Activated CD4-positive, alpha-beta T cell treated with anti-CD3 and anti-CD28 coated beads for 36 hours (primary cell): ENCODE measurements at regions of chr3 and their contacts with region 1.

Region 1: DNA sequence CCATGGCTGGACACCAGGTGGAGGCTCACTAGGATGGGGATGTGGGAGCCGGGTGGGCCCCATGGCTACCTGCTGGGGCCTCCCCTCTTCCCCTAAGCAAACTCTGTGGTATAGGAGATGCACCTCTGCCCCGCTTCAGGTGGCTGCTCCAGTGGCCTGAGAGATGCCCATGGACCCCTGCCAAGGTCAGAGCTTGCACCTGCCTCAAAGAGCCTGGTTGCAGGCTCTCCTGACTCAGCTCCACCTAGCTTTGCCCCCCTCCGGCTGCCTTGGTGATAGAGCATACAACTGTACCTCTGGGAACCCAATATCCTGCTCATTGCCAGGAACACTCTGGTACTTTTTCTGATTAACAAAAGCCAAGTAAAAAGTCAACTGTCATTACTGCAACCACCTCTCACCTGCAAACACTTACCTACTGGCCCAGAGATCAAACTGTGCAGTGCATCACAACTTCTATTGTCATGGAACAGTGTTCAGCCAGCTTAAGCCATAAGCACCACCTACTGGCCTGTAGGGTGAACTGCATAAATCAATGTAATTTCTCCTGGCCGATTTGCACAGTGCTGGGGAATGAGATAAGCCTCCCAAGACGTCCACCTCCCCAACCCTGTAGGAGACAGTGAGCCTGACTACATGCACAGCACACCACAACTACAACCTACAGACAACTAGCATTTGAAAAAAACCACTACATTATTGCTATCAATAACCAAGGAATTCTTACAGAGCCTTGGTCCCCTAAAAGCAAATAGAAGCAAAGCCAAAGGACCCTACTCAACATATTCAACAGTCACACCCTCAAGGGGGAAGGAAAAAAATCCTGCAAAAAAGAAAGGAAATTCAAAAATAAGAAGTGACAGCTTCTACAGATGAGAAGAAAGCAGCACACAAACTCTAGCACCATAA is 352.4 kb upstream of the ARHGEF26 start:
- DNase-seq: peak; percentile 52
- ATAC-seq: peak; percentile 97
- H3K4me3 Mint-ChIP-seq: no peak overlapping the region
- H3K27ac Mint-ChIP-seq: no peak overlapping the region
- H3K4me1 Mint-ChIP-seq: no peaks in the 10 kb centered on the region
- H3K27me3 Mint-ChIP-seq: peaks cover 3% of the 10 kb centered on the region

Region 2: DNA sequence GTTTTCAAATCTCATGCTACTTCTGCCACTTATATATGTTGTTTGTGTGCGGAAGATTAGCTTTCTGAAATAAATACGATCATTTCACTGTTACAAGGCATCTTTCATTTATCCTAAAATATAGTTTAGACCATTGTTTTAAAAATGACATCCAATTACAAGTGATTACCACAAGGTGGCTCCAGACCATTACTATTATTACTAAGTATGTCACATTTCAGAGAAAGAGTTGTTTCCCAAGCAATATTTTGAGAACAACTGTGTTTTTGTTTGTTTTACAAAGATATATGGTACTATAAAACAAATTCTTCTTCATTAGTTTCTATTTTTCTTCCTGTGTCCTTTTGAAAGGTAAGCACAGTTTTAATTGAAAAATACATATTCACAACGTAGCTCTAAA is 742.8 kb before region 1 on chr3:
- CTCF ChIA-PET with region 1: interaction called, 6 read pairs
- POLR2A ChIA-PET with region 1: no interaction called
- intact Hi-C with region 1: loop called (anchors 1 kb)
- DNase-seq: no peak
- ATAC-seq: no peak
- H3K4me3 Mint-ChIP-seq: no peak overlapping the region
- H3K27ac Mint-ChIP-seq: no peak overlapping the region
- H3K4me1 Mint-ChIP-seq: no peaks in the 10 kb centered on the region
- H3K27me3 Mint-ChIP-seq: peaks cover 1% of the 10 kb centered on the region

Region 3: DNA sequence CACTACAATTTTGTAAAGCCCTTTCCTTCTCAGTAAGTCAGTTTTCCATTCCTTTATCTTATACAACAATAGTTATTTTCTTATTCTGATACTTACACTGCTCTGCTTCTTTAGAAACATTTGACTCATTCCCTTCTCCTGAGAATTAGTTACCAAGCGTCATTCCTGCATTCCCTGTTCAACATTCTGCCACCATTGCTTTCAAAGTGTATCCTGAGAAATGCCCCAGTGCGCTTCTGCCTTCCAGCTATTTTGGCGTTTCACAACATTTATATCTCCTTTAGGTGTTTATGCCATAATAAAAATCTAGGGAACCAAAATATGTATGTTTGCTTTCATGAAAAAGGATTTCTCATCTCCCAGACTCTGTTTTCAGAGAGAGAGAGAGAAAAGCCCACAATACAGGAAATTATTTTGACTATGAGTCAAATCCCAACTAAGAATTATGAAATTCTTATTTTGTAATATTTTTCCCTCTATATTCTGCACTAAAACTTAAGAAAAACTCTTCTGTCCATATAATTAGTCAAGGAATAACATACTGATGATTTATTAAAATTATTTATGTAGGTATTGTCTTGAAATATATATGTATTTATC is 725.0 kb before region 1 on chr3:
- CTCF ChIA-PET with region 1: interaction called, 6 read pairs
- POLR2A ChIA-PET with region 1: no interaction called
- intact Hi-C with region 1: loop called (anchors 1 kb)
- DNase-seq: no peak
- ATAC-seq: no peak
- H3K4me3 Mint-ChIP-seq: peak overlapping the region; percentile 32
- H3K27ac Mint-ChIP-seq: no peak overlapping the region
- H3K4me1 Mint-ChIP-seq: peaks cover 3% of the 10 kb centered on the region
- H3K27me3 Mint-ChIP-seq: peaks cover 2% of the 10 kb centered on the region

Region 4: DNA sequence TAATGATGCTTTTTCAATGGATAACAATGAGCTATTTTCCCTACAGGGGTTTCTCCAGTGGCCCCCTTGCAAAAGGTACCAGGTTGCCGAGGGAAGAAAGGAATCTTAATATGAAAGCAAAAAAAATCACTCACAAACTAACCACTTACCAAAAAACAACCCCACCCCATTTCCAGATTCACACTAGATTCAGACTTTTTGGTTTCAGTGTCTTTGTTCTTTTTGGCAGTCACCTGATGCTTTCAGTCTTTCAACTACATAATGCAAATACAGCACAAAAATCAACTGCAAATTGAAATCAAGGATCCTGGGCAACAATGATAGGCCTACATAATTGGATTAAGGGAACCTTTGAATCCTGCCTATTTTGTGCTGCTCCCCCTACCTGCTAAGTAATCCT is 677.8 kb before region 1 on chr3:
- CTCF ChIA-PET with region 1: no interaction called
- POLR2A ChIA-PET with region 1: no interaction called
- intact Hi-C with region 1: no loop called
- DNase-seq: no peak
- ATAC-seq: no peak
- H3K4me3 Mint-ChIP-seq: no peak overlapping the region
- H3K27ac Mint-ChIP-seq: no peak overlapping the region
- H3K4me1 Mint-ChIP-seq: peaks cover 21% of the 10 kb centered on the region
- H3K27me3 Mint-ChIP-seq: no peaks in the 10 kb centered on the region

Region 5: GRCh38 chr3:153291056-153291685 is 477.6 kb before region 1 on chr3:
- CTCF ChIA-PET with region 1: no interaction called
- POLR2A ChIA-PET with region 1: no interaction called
- intact Hi-C with region 1: loop called (anchors 2 to 5 kb)
- DNase-seq: no peak
- ATAC-seq: peak; percentile 30
- H3K4me3 Mint-ChIP-seq: no peak overlapping the region
- H3K27ac Mint-ChIP-seq: no peak overlapping the region
- H3K4me1 Mint-ChIP-seq: peaks cover 39% of the 10 kb centered on the region
- H3K27me3 Mint-ChIP-seq: no peaks in the 10 kb centered on the region

Region 6: GRCh38 chr3:153305189-153305588 is 463.6 kb before region 1 on chr3:
- CTCF ChIA-PET with region 1: no interaction called
- POLR2A ChIA-PET with region 1: no interaction called
- intact Hi-C with region 1: no loop called
- DNase-seq: no peak
- ATAC-seq: no peak
- H3K4me3 Mint-ChIP-seq: no peak overlapping the region
- H3K27ac Mint-ChIP-seq: no peak overlapping the region
- H3K4me1 Mint-ChIP-seq: no peaks in the 10 kb centered on the region
- H3K27me3 Mint-ChIP-seq: no peaks in the 10 kb centered on the region

Region 7: DNA sequence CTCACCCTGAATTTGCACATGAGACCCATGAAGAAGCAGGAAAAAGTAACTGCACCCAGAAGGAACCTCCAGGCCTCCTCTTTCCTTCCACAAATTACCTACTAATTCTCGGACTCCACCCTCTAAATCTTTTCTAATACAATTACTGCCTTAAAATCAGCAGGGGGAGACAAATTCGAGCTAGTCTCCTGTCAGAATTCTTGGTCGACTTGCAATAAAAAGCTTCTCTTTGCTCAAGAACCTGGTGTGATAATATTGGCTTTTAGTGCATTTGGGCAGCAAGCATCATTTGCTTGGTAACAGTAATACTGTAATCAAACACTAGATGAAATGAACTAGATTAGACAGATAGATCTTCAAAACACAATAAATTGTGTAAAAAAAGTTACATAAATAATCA is 324.9 kb before region 1 on chr3:
- CTCF ChIA-PET with region 1: interaction called, 4 read pairs
- POLR2A ChIA-PET with region 1: no interaction called
- intact Hi-C with region 1: loop called in 1 of 2 experiments (anchors 2 kb)
- DNase-seq: no peak
- ATAC-seq: no peak
- H3K4me3 Mint-ChIP-seq: no peak overlapping the region
- H3K27ac Mint-ChIP-seq: no peak overlapping the region
- H3K4me1 Mint-ChIP-seq: peaks cover 15% of the 10 kb centered on the region
- H3K27me3 Mint-ChIP-seq: no peaks in the 10 kb centered on the region

Region 8: DNA sequence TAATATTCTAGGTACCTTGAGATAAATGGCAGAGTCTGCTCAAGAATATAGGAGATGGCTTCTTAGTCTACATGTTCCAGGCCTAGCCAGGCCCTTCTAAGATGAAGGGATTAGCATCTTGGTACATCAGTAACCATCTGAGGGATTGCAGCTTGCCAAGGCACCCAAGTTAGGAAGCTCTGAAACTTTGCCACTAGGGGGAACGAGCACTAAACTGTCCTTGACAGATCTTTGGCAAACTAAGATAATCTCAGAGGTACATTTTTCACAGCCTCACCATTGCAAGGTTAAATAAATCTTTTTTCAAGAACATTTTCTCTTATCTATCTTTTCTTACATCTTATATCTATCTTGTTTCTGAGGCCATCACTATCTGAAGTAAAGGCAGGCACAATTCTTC is 255.6 kb before region 1 on chr3:
- CTCF ChIA-PET with region 1: interaction called, 4 read pairs
- POLR2A ChIA-PET with region 1: no interaction called
- intact Hi-C with region 1: loop called in 1 of 2 experiments (anchors 10 kb)
- DNase-seq: peak; percentile 7
- ATAC-seq: no peak
- H3K4me3 Mint-ChIP-seq: no peak overlapping the region
- H3K27ac Mint-ChIP-seq: no peak overlapping the region
- H3K4me1 Mint-ChIP-seq: no peaks in the 10 kb centered on the region
- H3K27me3 Mint-ChIP-seq: no peaks in the 10 kb centered on the region

Region 9: DNA sequence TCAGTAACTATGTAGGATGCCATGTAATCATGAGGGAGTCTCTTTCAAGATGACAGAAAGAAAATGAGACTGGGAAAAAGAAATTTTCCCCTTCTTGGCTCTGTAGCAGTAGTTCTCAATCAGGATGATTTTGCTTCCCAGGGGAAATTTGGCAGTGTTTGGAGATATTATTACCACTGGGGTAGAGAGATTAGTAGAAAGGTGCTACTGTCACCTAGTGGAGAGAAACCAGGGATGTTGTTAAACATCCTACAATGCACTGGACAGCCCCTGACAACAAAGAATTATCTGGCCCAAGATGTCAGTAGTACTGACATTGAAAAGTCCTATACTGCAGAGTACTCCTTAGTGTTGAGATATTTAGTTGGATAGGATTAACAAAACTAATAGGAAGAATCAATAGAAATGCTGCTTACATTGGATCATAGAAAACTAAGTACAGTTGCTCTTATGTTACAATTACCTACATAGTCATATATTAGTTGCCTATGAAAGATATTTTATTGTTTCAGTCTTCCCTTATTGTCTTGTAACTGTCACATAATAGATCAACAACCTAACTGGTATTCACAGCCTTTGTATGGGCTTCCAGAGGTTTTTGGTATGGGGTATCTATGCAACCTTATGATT is 173.5 kb before region 1 on chr3:
- CTCF ChIA-PET with region 1: no interaction called
- POLR2A ChIA-PET with region 1: no interaction called
- intact Hi-C with region 1: loop called in 1 of 2 experiments (anchors 5 kb)
- DNase-seq: no peak
- ATAC-seq: no peak
- H3K4me3 Mint-ChIP-seq: no peak overlapping the region
- H3K27ac Mint-ChIP-seq: no peak overlapping the region
- H3K4me1 Mint-ChIP-seq: no peaks in the 10 kb centered on the region
- H3K27me3 Mint-ChIP-seq: no peaks in the 10 kb centered on the region